Activated CD8-positive, alpha-beta T cell treated with anti-CD3 and anti-CD28 coated beads, Interleukin-2, amount 10 ng/mL, durations not matched to agents 7 days and 5 days (primary cell): ENCODE measurements at regions of chr19 and their contacts with region 1.

Region 1: DNA sequence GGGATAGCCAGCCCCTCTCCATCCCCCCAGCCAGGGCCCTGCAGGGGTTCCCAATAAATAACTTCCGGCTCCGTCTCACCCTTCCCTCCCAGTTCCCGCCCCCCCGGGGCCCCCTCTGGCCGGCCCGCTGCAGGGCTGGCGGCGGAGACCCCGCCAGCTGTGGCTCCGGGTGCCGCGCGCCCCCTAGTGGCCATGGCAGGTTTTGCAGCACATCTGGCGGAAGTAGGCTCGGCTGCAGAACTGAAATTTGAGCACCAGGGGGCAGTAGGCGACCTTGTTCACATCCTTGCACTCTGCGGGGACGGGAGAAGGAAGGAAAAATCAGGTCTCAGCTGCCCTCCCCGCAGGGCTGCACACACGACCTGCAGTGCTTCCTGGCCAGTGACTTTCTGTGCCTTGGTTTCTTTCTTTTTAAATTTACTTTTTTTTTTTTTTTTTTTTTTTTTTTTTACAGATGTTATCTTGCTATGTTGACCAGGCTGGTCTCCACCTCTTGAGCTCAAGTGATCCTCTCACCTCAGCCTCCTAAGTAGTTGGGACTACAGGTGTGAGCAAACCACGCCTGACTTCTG is 3.6 kb upstream of the MYO1F start:
- DNase-seq: peak; percentile 91
- ATAC-seq: peak; percentile 52
- H3K4me3 Mint-ChIP-seq: no peak overlapping the region
- H3K27ac Mint-ChIP-seq: no peak overlapping the region
- H3K4me1 Mint-ChIP-seq: peaks cover 24% of the 10 kb centered on the region
- H3K27me3 Mint-ChIP-seq: peaks cover 4% of the 10 kb centered on the region

Region 2: DNA sequence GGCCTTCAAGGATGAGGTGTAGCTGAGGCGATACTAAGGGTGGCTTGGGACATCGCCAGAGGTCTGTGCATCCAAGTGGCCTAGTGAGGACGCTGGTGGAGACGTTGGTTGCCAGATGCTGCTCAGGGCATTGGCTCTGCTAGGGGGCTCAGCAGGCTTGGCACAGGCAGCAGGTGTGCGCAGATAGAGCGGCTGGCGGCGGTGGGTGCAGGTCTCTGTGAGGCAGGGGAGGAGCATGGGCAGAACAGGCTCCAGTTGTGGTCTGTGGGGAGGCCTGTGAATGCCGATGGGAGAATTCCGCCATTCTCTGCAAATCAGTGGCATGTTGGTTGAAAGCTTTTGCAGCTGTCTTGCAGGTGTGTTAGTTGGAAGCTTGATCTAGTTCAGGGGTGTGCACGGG is 99.6 kb before region 1 on chr19:
- CTCF ChIA-PET with region 1: interaction called, 82 read pairs
- POLR2A ChIA-PET with region 1: interaction called, 3 read pairs
- DNase-seq: no peak
- ATAC-seq: peak; percentile 29
- H3K4me3 Mint-ChIP-seq: no peak overlapping the region
- H3K27ac Mint-ChIP-seq: peak overlapping the region; percentile 65
- H3K4me1 Mint-ChIP-seq: peaks cover 66% of the 10 kb centered on the region
- H3K27me3 Mint-ChIP-seq: no peaks in the 10 kb centered on the region

Region 3: DNA sequence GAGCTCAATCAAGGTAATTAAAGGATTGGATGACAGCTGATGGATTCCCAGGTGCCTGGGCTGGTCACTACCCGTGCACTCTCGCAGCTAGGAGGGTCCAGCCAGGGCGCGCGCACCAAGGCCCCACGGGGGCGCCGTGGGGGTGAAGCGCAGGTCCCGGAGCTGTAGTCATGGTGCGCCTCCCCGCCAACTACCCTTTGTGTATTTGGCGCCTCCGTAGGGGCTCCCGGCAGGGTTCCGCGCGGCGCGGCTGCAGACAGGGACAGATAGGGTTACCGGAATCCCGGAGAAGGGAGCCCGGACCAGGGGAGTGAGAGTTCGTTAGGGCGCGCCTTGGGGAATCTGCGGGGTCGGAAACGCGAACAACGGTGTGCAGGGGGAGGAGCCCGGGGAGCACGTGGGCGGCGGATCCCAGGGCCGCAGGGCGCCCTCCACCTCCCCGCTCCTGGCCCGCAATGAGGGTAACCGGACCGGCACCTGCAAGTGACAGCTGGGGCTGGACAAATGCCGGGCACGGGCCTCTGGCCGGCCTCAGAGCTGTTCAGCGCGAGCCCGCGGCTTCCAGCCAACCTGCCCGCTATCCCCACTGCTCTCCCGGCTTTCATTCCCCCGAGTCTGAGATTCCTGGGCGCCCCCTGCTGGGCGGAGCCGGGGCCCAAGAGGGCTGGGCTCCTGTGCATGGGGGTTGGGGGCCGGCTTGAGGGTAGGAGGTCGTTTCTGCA is 75.0 kb before region 1 on chr19:
- CTCF ChIA-PET with region 1: interaction called, 13 read pairs
- POLR2A ChIA-PET with region 1: no interaction called
- DNase-seq: peak; percentile 67
- ATAC-seq: peak; percentile 84
- H3K4me3 Mint-ChIP-seq: peak overlapping the region; percentile 84
- H3K27ac Mint-ChIP-seq: peak overlapping the region; percentile 81
- H3K4me1 Mint-ChIP-seq: peaks cover 41% of the 10 kb centered on the region
- H3K27me3 Mint-ChIP-seq: no peaks in the 10 kb centered on the region

Region 4: GRCh38 chr19:8544168-8544567 is 36.6 kb before region 1 on chr19:
- CTCF ChIA-PET with region 1: interaction called, 10 read pairs
- POLR2A ChIA-PET with region 1: no interaction called
- DNase-seq: no peak
- ATAC-seq: no peak
- H3K4me3 Mint-ChIP-seq: no peak overlapping the region
- H3K27ac Mint-ChIP-seq: no peak overlapping the region
- H3K4me1 Mint-ChIP-seq: peaks cover 2% of the 10 kb centered on the region
- H3K27me3 Mint-ChIP-seq: no peaks in the 10 kb centered on the region

Region 5: GRCh38 chr19:8592231-8593009 is 11.6 kb after region 1 on chr19:
- CTCF ChIA-PET with region 1: interaction called, 18 read pairs
- POLR2A ChIA-PET with region 1: no interaction called
- DNase-seq: peak; percentile 83
- ATAC-seq: peak; percentile 88
- H3K4me3 Mint-ChIP-seq: peak overlapping the region; percentile 53
- H3K27ac Mint-ChIP-seq: no peak overlapping the region
- H3K4me1 Mint-ChIP-seq: peaks cover 10% of the 10 kb centered on the region
- H3K27me3 Mint-ChIP-seq: peaks cover 12% of the 10 kb centered on the region